RWPE1 (cell line): ENCODE measurements at regions of chr4 and their contacts with region 1.

Region 1: DNA sequence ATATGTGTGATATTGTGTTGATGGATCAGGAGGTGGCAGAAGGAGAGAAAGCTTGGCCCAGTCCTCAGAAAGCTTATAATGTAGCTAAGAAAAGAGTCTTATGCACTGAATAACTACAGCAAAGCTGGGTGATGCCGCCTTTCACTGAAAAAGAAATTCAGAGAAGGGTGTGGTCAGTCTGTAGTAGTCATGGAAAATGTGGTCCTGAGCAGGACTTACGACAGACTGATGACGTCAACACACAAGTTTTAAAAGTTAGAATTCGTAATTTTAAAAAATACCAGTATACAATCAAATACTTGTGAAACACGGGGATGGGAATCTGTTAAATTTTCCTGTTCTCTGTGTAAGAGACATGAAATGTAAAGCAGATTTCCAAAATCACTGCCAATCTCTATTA is 87.0 kb upstream of the RAPGEF2 start:
- DNase-seq: no peak
- H3K27ac ChIP-seq: no peak overlapping the region
- CTCF ChIP-seq: no peak

Region 2: GRCh38 chr4:158895797-158896576 is 119.9 kb before region 1 on chr4:
- CTCF ChIA-PET with region 1: interaction called, 13 read pairs
- POLR2A ChIA-PET with region 1: no interaction called
- DNase-seq: peak; percentile 4
- H3K27ac ChIP-seq: no peak overlapping the region
- CTCF ChIP-seq: no peak

Region 3: DNA sequence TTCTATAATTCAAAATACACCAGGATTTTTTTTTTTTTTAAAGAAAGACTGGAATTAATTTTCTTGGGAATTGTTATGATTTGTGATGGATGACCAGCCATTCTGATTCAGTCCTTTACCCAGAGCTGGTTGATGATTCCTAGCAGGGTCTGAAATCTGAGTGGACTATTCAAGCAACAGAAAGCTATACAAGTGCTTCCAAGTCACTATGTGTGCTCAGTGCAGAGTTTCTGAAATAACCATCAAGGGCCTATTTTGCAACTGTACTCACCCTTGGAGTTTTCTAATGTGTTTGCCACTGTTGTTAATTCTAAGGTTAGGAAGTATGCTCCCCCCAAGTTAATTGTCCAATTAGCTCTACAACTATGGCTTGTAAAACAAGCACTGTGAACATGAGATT is 50.6 kb before region 1 on chr4:
- CTCF ChIA-PET with region 1: no interaction called
- POLR2A ChIA-PET with region 1: no interaction called
- DNase-seq: no peak
- H3K27ac ChIP-seq: no peak overlapping the region
- CTCF ChIP-seq: no peak